ENCODE measurements at regions of chr9 and their contacts with region 1.

Region 1: DNA sequence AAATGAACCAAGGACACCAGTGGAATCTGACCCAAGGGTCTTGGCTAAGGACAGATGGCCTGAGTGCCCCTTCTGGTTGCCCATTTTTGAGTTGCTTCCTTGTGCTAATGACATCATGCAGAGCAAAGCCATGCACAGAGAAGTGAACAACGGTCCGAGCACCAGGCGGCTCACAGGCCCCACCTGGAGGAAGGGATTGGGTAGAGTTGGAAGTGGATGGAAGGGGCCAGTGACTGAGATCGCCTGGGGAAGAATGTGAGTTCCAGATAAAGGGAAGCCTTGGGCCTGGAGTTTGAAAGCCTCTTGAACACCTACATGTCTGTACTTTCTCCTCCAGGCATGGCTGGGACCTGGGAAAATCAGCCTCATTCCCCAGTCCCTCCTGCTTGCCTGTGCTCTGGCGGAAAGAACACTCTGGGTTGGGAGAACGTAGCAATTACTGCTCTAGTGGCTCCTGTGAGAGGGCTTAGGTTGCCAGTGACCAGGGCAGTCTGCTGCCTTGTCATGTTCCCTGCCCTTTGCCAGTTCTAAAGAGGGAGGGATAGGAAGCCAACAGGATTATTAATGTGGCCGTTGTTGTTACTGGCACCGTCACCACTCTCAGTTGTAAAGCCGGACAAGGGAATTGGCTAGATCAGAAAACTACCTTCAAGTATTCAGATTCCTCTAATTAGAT is 62.5 kb upstream of the PTPN3 start:
- DNase-seq: peak in 1 of 4 experiments; percentile 7
- ATAC-seq: peak; percentile 85
- H3K4me3 ChIP-seq: no peak overlapping the region
- H3K27ac ChIP-seq: no peak overlapping the region
- H3K4me1 ChIP-seq: no peaks in the 10 kb centered on the region
- H3K27me3 ChIP-seq: no peaks in the 10 kb centered on the region
- CTCF ChIP-seq: peak in 2 of 3 experiments; percentile 19 to 20; a peak in 1 of 6 replicates
- EP300 ChIP-seq: no peak
- POLR2A ChIP-seq: no peak
- RAD21 ChIP-seq: no peak

Region 2: GRCh38 chr9:109549386-109549785 is 11.2 kb before region 1 on chr9:
- CTCF ChIA-PET with region 1: no interaction called
- POLR2A ChIA-PET with region 1: no interaction called
- in situ Hi-C with region 1: no loop called
- intact Hi-C with region 1: no loop called
- DNase-seq: no peak
- ATAC-seq: no peak
- H3K4me3 ChIP-seq: no peak overlapping the region
- H3K27ac ChIP-seq: no peak overlapping the region
- H3K4me1 ChIP-seq: no peaks in the 10 kb centered on the region
- H3K27me3 ChIP-seq: no peaks in the 10 kb centered on the region
- CTCF ChIP-seq: no peak
- EP300 ChIP-seq: no peak
- POLR2A ChIP-seq: no peak
- RAD21 ChIP-seq: no peak

Region 3: GRCh38 chr9:109880277-109881169 is 319.9 kb after region 1 on chr9:
- CTCF ChIA-PET with region 1: no interaction called
- POLR2A ChIA-PET with region 1: no interaction called
- in situ Hi-C with region 1: no loop called
- intact Hi-C with region 1: loop called (anchors 10 kb)
- DNase-seq: peak; percentile 40 to 63 (median 55)
- ATAC-seq: peak; percentile 87
- H3K4me3 ChIP-seq: no peak overlapping the region
- H3K27ac ChIP-seq: no peak overlapping the region
- H3K4me1 ChIP-seq: no peaks in the 10 kb centered on the region
- H3K27me3 ChIP-seq: no peaks in the 10 kb centered on the region
- CTCF ChIP-seq: peak; percentile 30 to 61 (median 49); a peak in 5 of 6 replicates
- EP300 ChIP-seq: no peak
- POLR2A ChIP-seq: no peak
- RAD21 ChIP-seq: no peak

Region 4: DNA sequence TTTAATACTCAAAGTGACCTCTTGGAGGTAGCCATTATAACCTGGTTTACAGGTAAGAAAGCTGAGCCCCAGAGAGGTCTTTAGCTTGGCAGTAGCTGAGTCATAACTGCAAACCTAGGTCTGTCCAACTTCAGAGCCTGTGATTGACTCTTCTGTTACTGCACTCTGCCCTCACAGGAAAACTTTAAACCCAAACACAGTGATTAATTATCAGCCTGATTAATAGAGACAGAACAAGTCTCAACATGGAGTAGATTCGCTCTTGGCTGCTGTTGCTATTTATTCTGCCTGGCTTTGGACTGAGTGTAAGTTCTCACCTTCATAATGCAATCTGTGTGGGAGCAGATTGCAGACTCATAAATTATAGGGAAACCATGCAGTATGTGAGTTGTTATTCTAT is 723.2 kb after region 1 on chr9:
- CTCF ChIA-PET with region 1: no interaction called
- POLR2A ChIA-PET with region 1: no interaction called
- in situ Hi-C with region 1: no loop called
- intact Hi-C with region 1: loop called (anchors 10 kb)
- DNase-seq: no peak
- ATAC-seq: no peak
- H3K4me3 ChIP-seq: no peak overlapping the region
- H3K27ac ChIP-seq: no peak overlapping the region
- H3K4me1 ChIP-seq: no peaks in the 10 kb centered on the region
- H3K27me3 ChIP-seq: peaks cover 7 to 10% of the 10 kb centered on the region in 2 experiments; a peak in 4 of 5 replicates
- CTCF ChIP-seq: no peak
- EP300 ChIP-seq: no peak
- POLR2A ChIP-seq: no peak
- RAD21 ChIP-seq: no peak